ENCODE measurements at regions of chr13 and their contacts with region 1.

Region 1: DNA sequence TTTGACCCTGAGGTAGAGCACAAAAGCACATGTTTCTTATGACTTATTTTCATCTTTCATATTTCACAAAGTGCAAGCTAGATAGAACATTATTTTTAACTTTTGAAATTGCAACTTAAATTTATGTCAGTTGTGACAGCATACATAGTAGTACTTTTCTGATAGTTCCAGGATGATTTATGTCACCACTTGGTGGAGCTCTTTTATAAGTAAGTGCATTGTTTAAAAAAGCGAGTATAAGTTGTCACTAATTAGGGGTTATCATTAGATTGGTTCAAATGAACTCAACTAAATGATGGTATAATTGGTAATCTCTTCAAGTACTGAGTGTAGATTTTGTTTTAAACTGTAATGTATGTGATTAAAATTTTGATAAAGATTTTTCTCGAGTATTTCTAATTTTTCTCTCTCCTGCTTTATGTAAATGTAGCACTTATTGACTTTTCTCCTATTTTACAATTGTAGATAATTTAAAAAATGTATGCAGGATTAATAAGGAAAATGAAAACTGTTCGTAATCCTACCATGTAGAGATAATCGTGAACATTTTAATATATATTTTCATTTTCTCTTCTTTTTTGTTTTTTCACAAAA is 31.1 kb downstream of the RB1 start:
- DNase-seq: no peak
- ATAC-seq: peak; percentile 33
- H3K4me3 ChIP-seq: no peak overlapping the region
- H3K27ac ChIP-seq: no peak overlapping the region
- H3K4me1 ChIP-seq: no peaks in the 10 kb centered on the region
- H3K27me3 ChIP-seq: no peaks in the 10 kb centered on the region
- CTCF ChIP-seq: peak; percentile 26 to 70 (median 61)
- POLR2A ChIP-seq: no peak

Region 2: GRCh38 chr13:48160606-48161278 is 173.9 kb before region 1 on chr13:
- intact Hi-C with region 1: no loop called
- DNase-seq: no peak
- ATAC-seq: no peak
- H3K4me3 ChIP-seq: no peak overlapping the region
- H3K27ac ChIP-seq: peak overlapping the region in 1 of 4 donors; percentile 60
- H3K4me1 ChIP-seq: peaks cover 11% of the 10 kb centered on the region
- H3K27me3 ChIP-seq: no peaks in the 10 kb centered on the region
- CTCF ChIP-seq: no peak
- POLR2A ChIP-seq: no peak

Region 3: GRCh38 chr13:48400850-48401291 is 66.2 kb after region 1 on chr13:
- intact Hi-C with region 1: no loop called
- DNase-seq: no peak
- ATAC-seq: peak; percentile 30
- H3K4me3 ChIP-seq: no peak overlapping the region
- H3K27ac ChIP-seq: peak overlapping the region in 1 of 4 donors; percentile 52
- H3K4me1 ChIP-seq: peaks cover 11% of the 10 kb centered on the region
- H3K27me3 ChIP-seq: no peaks in the 10 kb centered on the region
- CTCF ChIP-seq: no peak
- POLR2A ChIP-seq: no peak

Region 4: DNA sequence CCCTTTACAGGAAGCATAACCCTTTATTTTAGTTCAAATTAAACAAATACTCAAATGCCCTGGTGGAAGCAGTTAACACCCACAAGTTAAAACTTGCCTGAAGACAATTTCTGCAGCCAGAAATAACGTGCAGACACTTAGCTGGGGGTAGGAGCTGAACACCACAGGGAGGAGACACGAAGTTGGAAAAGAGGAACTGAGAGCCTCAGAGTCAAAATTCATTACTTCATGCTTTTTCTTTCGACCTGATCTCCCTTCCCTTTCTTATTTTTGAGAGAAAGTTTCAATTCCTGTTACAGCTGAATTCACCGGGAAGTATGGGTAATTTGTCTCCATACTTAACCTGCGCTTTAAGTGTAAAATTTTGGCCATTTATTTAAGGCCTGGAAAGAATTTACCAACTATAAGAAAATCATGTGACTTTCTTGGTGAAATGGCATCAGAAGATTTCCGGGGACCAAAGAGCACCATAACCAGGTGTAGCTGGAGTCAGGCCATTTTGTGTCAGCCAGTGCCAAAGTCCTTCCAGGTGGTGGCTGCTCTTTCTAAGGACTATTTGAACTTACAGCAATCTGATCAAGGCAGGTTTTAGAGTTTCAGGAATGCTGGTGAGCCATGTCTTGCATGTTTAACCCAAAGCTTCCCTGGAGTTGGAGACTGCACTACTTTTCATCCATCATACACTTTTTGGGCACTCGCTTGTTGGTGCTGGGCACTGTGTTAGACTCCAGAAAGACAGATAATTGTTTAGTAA is 244.7 kb after region 1 on chr13:
- intact Hi-C with region 1: loop called (anchors 5 kb)
- DNase-seq: peak in 2 of 4 donors; percentile 34 to 52
- ATAC-seq: no peak
- H3K4me3 ChIP-seq: no peak overlapping the region
- H3K27ac ChIP-seq: peak overlapping the region in 1 of 4 donors; percentile 55
- H3K4me1 ChIP-seq: peaks cover 13% of the 10 kb centered on the region
- H3K27me3 ChIP-seq: no peaks in the 10 kb centered on the region
- CTCF ChIP-seq: no peak
- POLR2A ChIP-seq: no peak

Measured in body of pancreas (tissue), 4 donors.